ENCODE measurements at regions of chr5 and their contacts with region 1.

Region 1: GRCh38 chr5:172276214-172276613 is 7.3 kb downstream of the UBTD2 start:
- DNase-seq: no peak
- H3K4me3 ChIP-seq: no peak overlapping the region
- H3K27ac ChIP-seq: no peak overlapping the region
- H3K4me1 ChIP-seq: peaks cover 7% of the 10 kb centered on the region
- H3K27me3 ChIP-seq: no peaks in the 10 kb centered on the region
- CTCF ChIP-seq: no peak

Region 2: DNA sequence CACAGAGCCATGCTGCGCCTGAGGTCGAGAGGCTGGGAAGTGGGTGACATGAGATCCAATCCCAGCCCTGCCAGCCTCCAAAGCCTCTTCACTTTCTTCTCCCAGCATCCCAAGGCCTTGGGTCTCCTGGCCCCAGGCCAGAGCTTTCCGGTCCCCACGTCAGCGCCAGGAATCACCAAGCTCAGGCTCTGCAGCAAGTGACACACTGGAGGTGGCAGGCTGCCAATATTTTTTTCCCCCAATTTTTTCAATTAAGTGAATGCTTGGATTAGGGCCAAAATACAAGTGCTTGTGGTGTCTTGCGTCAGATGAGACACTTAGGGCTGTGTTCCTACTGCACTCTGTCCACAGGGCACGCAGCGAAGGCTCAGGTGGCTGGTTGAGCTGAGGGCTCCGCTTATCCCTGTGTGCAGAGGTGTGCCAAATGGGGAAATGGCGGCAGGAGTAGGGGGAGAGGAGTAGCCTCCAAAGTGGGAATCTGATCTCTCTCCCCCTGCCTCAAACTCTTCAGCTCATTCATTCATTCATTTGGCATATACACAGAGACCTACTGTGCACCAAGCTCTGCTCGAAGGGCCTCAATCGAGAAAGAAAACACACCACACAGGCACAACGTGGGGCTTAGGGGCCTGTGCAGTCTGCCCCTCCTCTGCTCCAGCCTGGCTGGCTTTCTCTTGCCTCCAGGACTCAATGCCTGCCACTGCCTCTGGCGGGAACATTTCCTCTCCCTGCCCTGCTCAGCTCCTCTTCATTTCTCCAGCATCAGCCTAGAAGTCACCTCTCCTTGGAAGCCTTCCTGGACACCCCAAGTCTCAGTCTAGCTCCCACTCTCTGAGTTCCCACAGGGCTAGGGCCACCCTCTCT is 161.5 kb after region 1 on chr5:
- CTCF ChIA-PET with region 1: no interaction called
- POLR2A ChIA-PET with region 1: interaction called, 12 read pairs
- intact Hi-C with region 1: no loop called
- DNase-seq: peak; percentile 95
- H3K4me3 ChIP-seq: no peak overlapping the region
- H3K27ac ChIP-seq: peak overlapping the region; percentile 69
- H3K4me1 ChIP-seq: peaks cover 19% of the 10 kb centered on the region
- H3K27me3 ChIP-seq: no peaks in the 10 kb centered on the region
- CTCF ChIP-seq: no peak

Region 3: GRCh38 chr5:172463031-172463430 is 186.8 kb after region 1 on chr5:
- CTCF ChIA-PET with region 1: no interaction called
- POLR2A ChIA-PET with region 1: no interaction called
- intact Hi-C with region 1: no loop called
- DNase-seq: no peak
- H3K4me3 ChIP-seq: no peak overlapping the region
- H3K27ac ChIP-seq: no peak overlapping the region
- H3K4me1 ChIP-seq: no peaks in the 10 kb centered on the region
- H3K27me3 ChIP-seq: no peaks in the 10 kb centered on the region
- CTCF ChIP-seq: no peak

Measured in A673 (cell line).